ENCODE measurements at regions of chr7 and their contacts with region 1.

Region 1: DNA sequence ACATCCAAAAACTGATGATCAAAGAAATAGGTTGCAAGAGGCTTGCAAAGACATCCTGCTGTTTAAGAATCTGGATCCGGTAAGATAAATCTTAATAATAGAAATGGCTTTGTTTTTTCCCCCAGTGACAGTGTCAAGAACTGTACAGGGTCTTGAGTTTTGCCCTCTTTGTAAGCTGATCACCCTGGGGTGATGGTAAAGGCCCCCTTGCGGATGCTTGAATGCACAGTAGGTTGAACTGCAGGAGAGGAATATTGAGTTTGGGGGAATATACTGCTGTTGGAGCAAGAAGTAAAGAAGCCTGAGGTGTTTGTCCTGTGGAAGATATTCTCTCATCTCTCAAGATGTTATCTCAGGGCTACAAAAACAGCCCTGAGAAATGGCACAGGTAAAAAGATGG is 40.6 kb upstream of the HBP1 start:
- DNase-seq: no peak
- H3K4me3 ChIP-seq: no peak overlapping the region
- H3K27ac ChIP-seq: no peak overlapping the region
- H3K4me1 ChIP-seq: no peaks in the 10 kb centered on the region
- H3K27me3 ChIP-seq: no peaks in the 10 kb centered on the region
- CTCF ChIP-seq: no peak

Region 2: DNA sequence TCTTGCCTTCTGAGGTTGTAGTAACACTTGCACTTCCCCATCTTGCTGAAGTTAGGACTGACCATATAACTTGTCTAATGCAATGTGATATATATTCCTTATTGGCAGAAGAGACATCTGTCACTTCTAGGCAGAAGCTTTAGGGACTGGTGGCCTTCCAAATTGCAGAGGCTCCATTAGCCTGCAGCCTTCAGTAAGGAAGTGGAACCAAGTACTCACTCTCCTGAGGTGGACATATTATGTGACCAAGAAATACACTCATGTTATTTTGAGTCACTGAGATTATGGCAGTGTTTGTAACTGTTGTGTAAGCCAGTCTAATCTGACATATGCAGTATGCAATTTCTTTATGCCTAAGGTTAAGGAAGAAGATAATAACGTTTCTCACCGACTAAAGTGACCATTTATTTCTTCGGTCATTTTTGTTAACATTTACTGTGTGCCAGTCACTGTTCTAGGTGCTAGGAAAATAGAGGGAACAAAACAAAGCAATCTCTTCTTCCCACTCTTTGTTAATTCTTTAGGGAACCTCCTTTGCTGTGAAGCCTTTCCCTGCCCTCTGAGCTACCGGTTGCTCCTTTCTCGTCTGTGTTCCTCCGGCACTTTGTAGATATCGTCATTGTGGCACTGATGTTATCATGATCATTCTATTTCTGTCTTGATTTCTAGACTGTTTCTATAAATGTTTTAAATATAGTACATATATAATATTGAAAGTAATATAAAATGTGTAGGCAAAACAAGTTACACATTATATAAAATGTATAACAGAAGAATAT is 12.3 kb before region 1 on chr7:
- intact Hi-C with region 1: loop called (anchors 1 kb)
- DNase-seq: no peak
- H3K4me3 ChIP-seq: no peak overlapping the region
- H3K27ac ChIP-seq: no peak overlapping the region
- H3K4me1 ChIP-seq: no peaks in the 10 kb centered on the region
- H3K27me3 ChIP-seq: no peaks in the 10 kb centered on the region
- CTCF ChIP-seq: no peak

Region 3: DNA sequence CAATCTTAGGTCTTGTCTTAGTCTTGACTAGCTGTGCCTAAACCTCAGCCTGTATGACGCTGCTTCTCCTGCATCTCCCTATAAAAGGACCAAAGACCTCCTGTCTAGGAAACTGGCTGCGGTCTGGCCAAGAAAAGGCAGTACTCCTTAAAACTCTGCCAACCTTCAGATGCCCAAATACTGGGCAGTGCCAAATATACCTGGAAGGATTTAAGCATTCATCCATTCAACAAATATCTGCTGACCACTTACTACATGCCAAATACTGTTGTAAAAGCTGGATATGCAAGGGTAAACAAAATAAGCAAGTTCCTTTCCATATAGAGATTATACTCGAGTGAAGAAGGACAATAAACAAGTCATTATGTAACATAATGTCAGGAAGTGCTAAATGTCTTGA is 176.4 kb after region 1 on chr7:
- intact Hi-C with region 1: no loop called
- DNase-seq: no peak
- H3K4me3 ChIP-seq: no peak overlapping the region
- H3K27ac ChIP-seq: no peak overlapping the region
- H3K4me1 ChIP-seq: no peaks in the 10 kb centered on the region
- H3K27me3 ChIP-seq: no peaks in the 10 kb centered on the region
- CTCF ChIP-seq: no peak